PC-3 (cell line): ENCODE measurements at regions of chr1 and their contacts with region 1.

Region 1: DNA sequence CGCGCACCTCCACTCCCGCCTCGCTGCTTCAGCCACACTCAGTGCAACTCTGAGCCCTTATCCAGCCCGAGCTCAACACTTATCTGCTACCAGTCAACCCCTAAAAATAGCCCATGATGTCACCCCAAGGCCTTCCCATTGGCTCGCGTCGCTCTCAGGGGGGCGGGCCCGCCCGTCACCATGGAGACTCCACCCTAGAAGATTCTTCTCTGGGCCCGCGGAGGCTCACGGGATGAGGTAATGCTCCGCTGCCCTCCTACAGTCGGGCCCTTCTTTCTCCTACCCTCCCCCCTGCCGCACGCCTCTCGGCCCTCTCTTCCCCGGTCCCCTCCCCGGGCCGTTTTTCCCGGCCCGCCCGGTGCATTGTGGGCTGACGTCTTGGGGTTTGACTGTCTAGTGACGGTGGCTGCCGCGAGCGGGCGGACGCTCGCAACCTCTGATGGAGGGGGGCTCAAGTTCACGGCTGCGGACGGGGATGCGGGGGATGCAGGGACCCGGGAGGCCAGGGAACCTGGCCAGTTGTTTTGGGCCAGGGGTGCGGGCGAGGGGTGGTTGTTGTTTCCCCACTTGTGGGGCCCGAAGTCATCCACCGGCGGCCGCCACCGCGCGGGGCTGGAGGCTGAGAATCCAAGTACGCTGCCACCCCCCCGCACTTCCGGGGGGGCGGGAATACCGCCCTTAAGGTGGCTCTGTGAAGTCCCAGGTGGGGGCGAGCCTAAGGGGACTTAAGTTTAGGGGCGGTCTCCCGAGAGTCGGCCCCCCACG is at the start of gene JUN:
- DNase-seq: peak; percentile 99
- ATAC-seq: peak; percentile 71
- H3K4me3 ChIP-seq: peak within 1 kb of the TSS; percentile 76
- H3K27ac ChIP-seq: peak within 1 kb of the TSS; percentile 84
- H3K4me1 ChIP-seq: peaks cover 27% of the 10 kb centered on the region
- H3K27me3 ChIP-seq: no peaks in the 10 kb centered on the region
- CTCF ChIP-seq: no peak
- total RNA-seq, gene JUN: 73.6 and 95.1 TPM in 2 replicates

Region 2: DNA sequence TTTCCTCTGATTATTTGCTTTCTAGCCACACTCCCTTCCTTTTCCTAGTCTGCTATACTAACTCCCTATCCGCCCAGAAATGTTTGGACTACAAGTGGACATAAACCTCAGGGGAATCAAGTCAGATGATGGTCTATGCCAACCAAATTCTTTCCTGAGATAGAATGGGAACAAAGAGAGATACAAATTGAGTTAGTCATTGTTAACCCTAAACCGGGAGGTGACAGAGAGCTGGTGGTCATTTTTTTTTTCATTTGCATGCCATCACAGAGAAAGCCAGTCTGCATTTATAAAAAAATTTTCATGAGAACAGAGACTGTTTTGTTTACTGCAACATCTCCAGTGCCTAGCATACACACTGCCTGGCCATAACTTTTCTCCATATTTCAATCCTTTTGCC is 119.3 kb before region 1 on chr1:
- CTCF ChIA-PET with region 1: no interaction called
- POLR2A ChIA-PET with region 1: no interaction called
- intact Hi-C with region 1: no loop called
- DNase-seq: no peak
- ATAC-seq: no peak
- H3K4me3 ChIP-seq: no peak overlapping the region
- H3K27ac ChIP-seq: no peak overlapping the region
- H3K4me1 ChIP-seq: no peaks in the 10 kb centered on the region
- H3K27me3 ChIP-seq: no peaks in the 10 kb centered on the region
- CTCF ChIP-seq: no peak

Region 3: GRCh38 chr1:58848818-58849411 is 64.7 kb after region 1 on chr1:
- CTCF ChIA-PET with region 1: no interaction called
- POLR2A ChIA-PET with region 1: interaction called, 8 read pairs
- intact Hi-C with region 1: loop called (anchors 1 kb)
- DNase-seq: peak; percentile 99
- ATAC-seq: peak; percentile 94
- H3K4me3 ChIP-seq: peak overlapping the region; percentile 34; the same call in 1 of the 2 replicates
- H3K27ac ChIP-seq: peak overlapping the region; percentile 94
- H3K4me1 ChIP-seq: peaks cover 44% of the 10 kb centered on the region
- H3K27me3 ChIP-seq: no peaks in the 10 kb centered on the region
- CTCF ChIP-seq: no peak

Region 4: DNA sequence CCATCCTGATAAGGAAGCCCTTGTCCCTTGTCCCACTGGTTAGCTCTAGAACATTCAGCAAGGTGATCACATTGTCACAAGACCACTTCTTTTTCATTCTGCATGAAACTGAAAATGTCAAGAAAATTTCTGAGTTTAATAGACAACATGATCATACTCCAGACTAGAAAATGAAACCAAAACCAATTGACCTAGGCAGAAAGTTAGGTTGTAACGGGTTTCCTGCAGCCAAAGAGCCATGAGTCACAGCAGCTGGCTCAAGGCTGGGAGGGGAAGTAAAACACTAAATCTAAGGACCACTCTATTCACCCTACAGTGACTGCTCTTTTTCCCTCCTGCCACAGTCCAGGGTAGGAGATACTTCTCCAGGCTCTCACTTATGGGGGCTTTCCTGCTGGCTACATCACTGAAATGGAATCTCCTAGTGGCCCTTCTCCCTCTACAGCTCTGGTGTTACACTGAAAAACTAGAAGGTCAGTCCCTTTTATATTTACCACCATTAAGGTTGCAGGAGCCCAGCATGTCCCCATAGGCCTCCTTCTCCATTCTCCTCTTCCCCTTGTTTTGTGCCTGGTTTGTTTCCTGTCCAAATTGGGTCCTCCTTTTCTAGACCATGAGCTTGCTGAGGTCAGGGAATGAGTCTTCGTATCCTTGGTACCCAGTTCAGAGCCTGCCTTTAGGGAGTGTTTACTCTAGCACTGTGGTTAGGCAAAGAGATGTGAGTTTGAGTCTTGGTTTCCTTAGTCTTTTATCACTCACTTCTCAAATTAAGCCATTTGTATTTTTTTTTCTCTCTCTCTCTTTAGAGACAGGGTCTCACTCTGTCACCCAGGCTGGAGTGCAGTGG is 236.2 kb after region 1 on chr1:
- CTCF ChIA-PET with region 1: no interaction called
- POLR2A ChIA-PET with region 1: no interaction called
- intact Hi-C with region 1: loop called (anchors 10 kb)
- DNase-seq: peak; percentile 58
- ATAC-seq: peak; percentile 77
- H3K4me3 ChIP-seq: no peak overlapping the region
- H3K27ac ChIP-seq: no peak overlapping the region
- H3K4me1 ChIP-seq: peaks cover 26% of the 10 kb centered on the region
- H3K27me3 ChIP-seq: no peaks in the 10 kb centered on the region
- CTCF ChIP-seq: no peak

Region 5: DNA sequence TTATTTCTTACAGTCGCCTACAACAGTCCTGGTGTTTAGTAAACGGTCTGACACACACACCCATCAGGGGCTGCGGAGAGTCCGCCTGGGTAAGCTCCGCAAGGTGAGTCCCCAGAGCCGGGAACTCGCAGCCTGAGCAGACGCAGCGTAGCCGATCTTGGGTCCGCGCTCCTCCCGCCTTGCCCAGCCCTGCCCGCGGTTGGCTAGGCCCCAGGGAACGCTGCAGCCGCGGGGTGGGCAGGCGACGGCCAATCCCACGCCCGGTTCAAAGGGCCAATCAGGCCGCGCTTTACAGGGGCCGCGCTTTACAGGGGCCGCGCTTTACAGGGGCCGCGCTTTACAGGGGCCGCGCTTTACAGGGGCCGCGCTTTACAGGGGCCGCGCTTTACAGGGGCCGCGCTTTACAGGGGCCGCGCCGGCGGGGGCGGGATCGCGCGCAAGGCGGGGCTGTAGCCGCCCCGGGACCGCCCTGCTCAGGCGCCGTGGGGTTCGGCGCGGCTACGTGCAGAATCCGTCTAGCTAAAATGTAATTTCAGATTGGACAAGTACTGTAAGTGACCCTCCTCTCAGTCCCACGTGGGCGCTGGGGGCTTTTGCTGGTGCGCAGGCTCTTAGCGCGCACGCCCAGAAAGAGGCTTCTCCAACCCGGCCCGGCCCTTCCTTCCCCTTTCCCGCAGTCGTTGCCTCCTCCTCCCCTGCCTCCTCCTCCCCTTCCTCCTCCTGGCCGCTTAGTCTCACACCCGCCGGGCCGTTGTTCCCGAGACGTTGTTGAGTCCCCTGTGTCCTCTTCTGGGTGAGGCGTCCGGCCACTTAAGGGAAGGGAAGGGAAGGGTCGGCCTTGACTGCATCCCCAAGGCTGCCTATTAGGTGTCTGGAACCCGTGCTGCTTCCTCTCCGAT is 512.4 kb after region 1 on chr1 and contains the start of gene FGGY:
- CTCF ChIA-PET with region 1: no interaction called
- POLR2A ChIA-PET with region 1: no interaction called
- intact Hi-C with region 1: loop called (anchors 1 kb)
- DNase-seq: peak; percentile 97
- ATAC-seq: peak; percentile 90
- H3K4me3 ChIP-seq: peak within 1 kb of the TSS; percentile 88
- H3K27ac ChIP-seq: peak within 1 kb of the TSS; percentile 76
- H3K4me1 ChIP-seq: peaks cover 30% of the 10 kb centered on the region
- H3K27me3 ChIP-seq: no peaks in the 10 kb centered on the region
- CTCF ChIP-seq: no peak
- total RNA-seq, gene FGGY: 7.4 and 10.1 TPM in 2 replicates

Region 6: DNA sequence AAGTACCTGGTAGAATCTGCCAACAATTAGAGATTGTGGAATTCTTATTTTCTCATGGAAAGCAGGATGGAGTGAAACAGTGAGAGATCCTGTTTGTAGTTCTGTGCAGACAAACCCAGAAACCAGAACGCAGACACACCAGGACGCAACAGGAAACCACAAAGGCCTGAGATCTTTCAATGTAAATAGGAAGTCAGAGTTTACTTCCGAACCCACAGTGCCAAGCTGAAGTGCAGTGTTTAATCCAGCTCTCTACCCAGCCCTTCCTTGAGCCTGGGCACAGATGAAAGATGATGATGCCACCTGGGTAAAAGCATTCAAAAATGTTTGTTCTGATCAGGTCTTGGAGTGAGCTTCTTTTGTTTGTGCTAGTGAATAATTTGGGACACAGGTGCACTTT is 786.3 kb after region 1 on chr1:
- CTCF ChIA-PET with region 1: no interaction called
- POLR2A ChIA-PET with region 1: no interaction called
- intact Hi-C with region 1: loop called (anchors 5 kb)
- DNase-seq: peak; percentile 60
- ATAC-seq: peak; percentile 92
- H3K4me3 ChIP-seq: no peak overlapping the region
- H3K27ac ChIP-seq: peak overlapping the region; percentile 54
- H3K4me1 ChIP-seq: peaks cover 16% of the 10 kb centered on the region
- H3K27me3 ChIP-seq: no peaks in the 10 kb centered on the region
- CTCF ChIP-seq: no peak

Region 7: DNA sequence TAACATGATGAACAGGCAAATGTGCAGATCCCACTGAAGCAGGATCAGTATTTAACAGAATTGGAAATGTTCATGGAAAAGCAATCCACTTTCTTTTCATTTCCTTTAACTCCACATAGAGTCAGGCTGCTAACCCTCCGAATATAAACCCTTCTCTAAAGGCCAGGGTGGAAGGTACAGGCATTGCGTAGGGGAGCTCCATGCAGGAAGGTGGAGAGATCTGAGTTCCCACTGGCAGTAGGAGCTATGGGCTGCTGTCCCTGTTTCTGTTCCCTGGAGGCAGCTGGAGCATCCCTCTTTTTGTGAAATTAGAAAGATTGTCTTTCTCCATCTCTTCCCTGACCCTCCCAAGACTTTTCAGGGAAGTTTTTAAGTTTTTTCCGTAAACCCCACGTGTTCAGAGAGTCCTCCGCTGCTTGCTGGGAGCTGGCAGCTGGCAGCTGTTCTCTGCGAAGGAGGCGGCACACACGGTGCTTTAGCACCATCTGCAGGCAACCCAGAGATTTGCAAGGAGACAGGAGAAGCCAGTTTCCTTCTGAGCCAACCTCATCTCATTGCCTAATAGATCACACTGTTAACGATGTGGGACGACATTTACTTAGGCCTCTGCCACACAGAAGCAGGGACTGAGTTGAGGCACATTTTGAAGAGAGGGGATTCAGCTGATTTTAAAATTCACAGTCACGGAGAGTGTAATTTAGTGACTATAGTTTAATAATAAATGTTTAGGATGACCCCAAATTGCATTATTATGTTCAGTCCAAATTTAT is 975.2 kb after region 1 on chr1:
- CTCF ChIA-PET with region 1: no interaction called
- POLR2A ChIA-PET with region 1: no interaction called
- intact Hi-C with region 1: loop called (anchors 1 kb)
- DNase-seq: peak; percentile 82
- ATAC-seq: peak; percentile 95
- H3K4me3 ChIP-seq: peak overlapping the region; percentile 45; the same call in 1 of the 2 replicates
- H3K27ac ChIP-seq: no peak overlapping the region
- H3K4me1 ChIP-seq: 0 out of 2 replicates have a peak, but pooled peaks cover 5% of the 10 kb centered on the region
- H3K27me3 ChIP-seq: no peaks in the 10 kb centered on the region
- CTCF ChIP-seq: peak; percentile 95